CD4-positive, alpha-beta memory T cell (primary cell): ENCODE measurements at regions of chr2 and their contacts with region 1.

Region 1: GRCh38 chr2:224816816-224817215 is 100.7 kb upstream of the CCDC195 start:
- DNase-seq: no peak
- H3K4me3 ChIP-seq: no peak overlapping the region
- H3K4me3 Mint-ChIP-seq: no peak overlapping the region
- H3K27ac ChIP-seq: no peak overlapping the region
- H3K27ac Mint-ChIP-seq: peak overlapping the region in 2 of 7 donors; percentile 7 to 65
- H3K4me1 ChIP-seq: no peaks in the 10 kb centered on the region
- H3K4me1 Mint-ChIP-seq: peaks cover 0 to 2% (median 0%) of the 10 kb centered on the region in 4 donors
- H3K27me3 ChIP-seq: no peaks in the 10 kb centered on the region
- H3K27me3 Mint-ChIP-seq: no peaks in the 10 kb centered on the region

Region 2: DNA sequence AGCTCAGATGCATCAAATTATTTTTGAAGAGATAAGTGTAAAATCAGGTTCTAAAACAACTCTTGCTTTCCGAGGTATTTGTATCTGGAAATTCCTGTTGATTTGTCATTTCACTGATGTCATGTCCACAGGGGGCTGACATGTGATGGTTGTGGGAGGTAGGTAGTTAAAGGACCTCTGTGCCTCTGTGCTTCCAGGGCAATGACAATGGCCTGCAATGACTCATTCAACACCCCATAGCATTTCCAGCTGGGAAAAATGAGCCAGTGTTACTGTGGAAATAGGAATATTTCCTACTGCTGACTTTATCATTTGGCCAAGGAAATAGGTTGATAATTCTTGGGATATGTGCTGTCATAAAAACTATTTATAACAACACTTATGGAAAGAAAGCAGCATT is 14.4 kb before region 1 on chr2:
- CTCF ChIA-PET with region 1: no interaction called
- POLR2A ChIA-PET with region 1: no interaction called
- intact Hi-C with region 1: no loop called
- DNase-seq: no peak
- H3K4me3 ChIP-seq: no peak overlapping the region
- H3K4me3 Mint-ChIP-seq: no peak overlapping the region
- H3K27ac ChIP-seq: no peak overlapping the region
- H3K27ac Mint-ChIP-seq: peak overlapping the region in 1 of 7 donors; percentile 51
- H3K4me1 ChIP-seq: no peaks in the 10 kb centered on the region
- H3K4me1 Mint-ChIP-seq: no peaks in the 10 kb centered on the region
- H3K27me3 ChIP-seq: no peaks in the 10 kb centered on the region
- H3K27me3 Mint-ChIP-seq: no peaks in the 10 kb centered on the region

Region 3: DNA sequence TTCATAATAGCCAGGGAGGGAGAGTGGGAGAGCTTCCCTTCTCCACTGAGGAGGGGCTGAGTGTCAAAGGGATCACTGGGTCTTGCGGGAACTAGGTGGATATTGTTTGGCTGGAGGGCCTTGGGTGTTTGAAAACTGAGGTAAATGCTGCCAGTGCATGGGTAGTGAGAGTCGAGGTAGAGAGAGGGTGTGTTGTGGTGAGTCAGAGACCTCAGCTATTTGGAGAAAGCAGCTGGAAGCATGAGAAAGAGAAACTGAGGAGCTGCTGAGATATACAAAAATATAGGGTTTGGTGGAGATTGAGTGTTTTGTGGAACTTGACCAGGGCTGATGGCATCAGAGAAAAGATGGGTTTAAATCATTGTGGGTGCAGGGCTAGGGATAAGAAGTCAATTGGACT is 26.3 kb after region 1 on chr2:
- CTCF ChIA-PET with region 1: no interaction called
- POLR2A ChIA-PET with region 1: no interaction called
- intact Hi-C with region 1: loop called (anchors 2 kb)
- DNase-seq: no peak
- H3K4me3 ChIP-seq: no peak overlapping the region
- H3K4me3 Mint-ChIP-seq: peak overlapping the region in 1 of 8 donors; percentile 49
- H3K27ac ChIP-seq: no peak overlapping the region
- H3K27ac Mint-ChIP-seq: peak overlapping the region in 5 of 7 donors; percentile 1 to 83 (median 14)
- H3K4me1 ChIP-seq: no peaks in the 10 kb centered on the region
- H3K4me1 Mint-ChIP-seq: peaks cover 0 to 2% (median 0%) of the 10 kb centered on the region in 4 donors
- H3K27me3 ChIP-seq: no peaks in the 10 kb centered on the region
- H3K27me3 Mint-ChIP-seq: no peaks in the 10 kb centered on the region

Region 4: GRCh38 chr2:225052703-225053102 is 235.9 kb after region 1 on chr2:
- CTCF ChIA-PET with region 1: no interaction called
- POLR2A ChIA-PET with region 1: no interaction called
- intact Hi-C with region 1: no loop called
- DNase-seq: peak; percentile 50 to 72 (median 58)
- H3K4me3 ChIP-seq: peak overlapping the region in 1 of 2 donors; percentile 26
- H3K4me3 Mint-ChIP-seq: peak overlapping the region in 7 of 8 donors; percentile 54 to 72 (median 62)
- H3K27ac ChIP-seq: peak overlapping the region; percentile 27
- H3K27ac Mint-ChIP-seq: peak overlapping the region; percentile 6 to 82 (median 31)
- H3K4me1 ChIP-seq: peaks cover 68% of the 10 kb centered on the region
- H3K4me1 Mint-ChIP-seq: peaks cover 46 to 72% (median 57%) of the 10 kb centered on the region in 4 donors
- H3K27me3 ChIP-seq: no peaks in the 10 kb centered on the region
- H3K27me3 Mint-ChIP-seq: no peaks in the 10 kb centered on the region